Activated CD4-positive, alpha-beta T cell treated with anti-CD3 and anti-CD28 coated beads, Interleukin-2, amount 10 ng/mL, durations not matched to agents 24 days and 14 days (primary cell): ENCODE measurements at regions of chr5 and their contacts with region 1.

Region 1: DNA sequence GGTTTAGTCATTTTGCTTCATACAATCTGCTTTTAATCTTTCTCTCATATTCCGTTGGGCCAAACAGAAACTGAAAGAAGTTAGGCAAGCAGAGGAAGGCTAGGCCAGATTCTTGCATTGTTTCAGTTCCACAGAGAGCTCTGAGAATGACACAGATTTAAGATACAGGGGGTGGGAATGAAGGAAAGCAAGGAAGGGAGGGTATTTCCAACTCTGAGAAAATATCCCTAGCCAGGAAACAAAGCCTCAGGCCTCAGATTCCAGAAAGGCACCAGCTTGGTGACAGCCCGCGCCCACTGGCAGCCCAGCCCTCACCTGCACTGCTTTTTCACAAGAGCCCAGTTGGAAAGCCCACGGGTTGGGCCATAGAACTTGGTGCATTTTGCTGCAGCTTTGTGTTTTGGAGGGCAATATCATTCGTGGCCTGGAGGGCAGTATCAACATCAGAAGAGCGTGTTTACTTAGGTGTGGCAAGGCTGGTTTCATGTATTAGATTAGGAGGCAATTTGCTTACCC is 63.5 kb downstream of the ENC1 start:
- DNase-seq: peak; percentile 79
- H3K4me3 Mint-ChIP-seq: peak overlapping the region; percentile 50
- H3K27ac Mint-ChIP-seq: peak overlapping the region; percentile 30
- H3K4me1 Mint-ChIP-seq: peaks cover 35% of the 10 kb centered on the region
- H3K27me3 Mint-ChIP-seq: peaks cover 5% of the 10 kb centered on the region

Region 2: GRCh38 chr5:74326571-74327338 is 250.2 kb before region 1 on chr5:
- intact Hi-C with region 1: loop called (anchors 2 kb)
- DNase-seq: peak; percentile 64
- H3K4me3 Mint-ChIP-seq: no peak overlapping the region
- H3K27ac Mint-ChIP-seq: no peak overlapping the region
- H3K4me1 Mint-ChIP-seq: peaks cover 4% of the 10 kb centered on the region
- H3K27me3 Mint-ChIP-seq: peaks cover 12% of the 10 kb centered on the region

Region 3: DNA sequence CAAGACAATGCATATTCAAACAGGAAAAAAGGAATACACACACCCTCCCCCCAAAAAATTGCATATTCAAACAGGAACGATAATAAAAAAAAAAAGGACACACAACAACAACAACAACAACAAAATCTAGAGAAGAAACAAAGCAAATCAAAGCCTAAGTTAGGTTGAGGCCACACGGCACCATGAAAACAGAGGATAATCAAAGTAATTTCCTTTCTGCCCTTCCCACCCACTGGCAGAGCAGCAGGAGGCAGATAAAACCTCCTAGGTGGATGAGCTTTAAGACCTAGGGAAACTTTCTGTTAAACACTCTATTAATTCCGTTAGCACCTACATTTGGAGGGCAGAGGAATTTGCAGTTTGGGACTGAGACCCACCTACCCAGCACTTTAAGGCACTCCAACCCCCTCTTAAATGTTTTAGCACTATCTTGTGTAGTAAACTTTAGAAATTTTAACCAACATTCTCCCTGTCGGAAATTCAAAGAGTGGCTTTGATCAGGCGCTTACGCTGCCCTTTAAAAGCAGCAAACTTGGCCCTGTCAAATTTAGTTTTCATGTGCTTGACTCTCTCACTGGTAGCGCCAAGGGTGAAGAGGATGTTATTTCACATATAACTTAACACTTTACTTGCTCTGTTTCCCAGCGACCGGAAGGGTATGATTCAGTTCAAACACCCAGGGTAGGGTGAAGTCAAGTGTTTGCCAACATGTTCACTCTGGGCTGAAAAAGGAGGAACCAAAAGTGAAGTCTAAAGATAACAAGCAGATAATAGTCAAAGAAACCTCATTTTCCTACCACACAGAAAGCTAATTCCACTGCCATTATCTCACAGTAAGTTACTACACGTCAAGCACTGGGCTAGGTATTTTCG is 54.3 kb after region 1 on chr5:
- intact Hi-C with region 1: loop called (anchors 2 kb)
- DNase-seq: peak; percentile 75
- H3K4me3 Mint-ChIP-seq: no peak overlapping the region
- H3K27ac Mint-ChIP-seq: peak overlapping the region; percentile 59
- H3K4me1 Mint-ChIP-seq: peaks cover 13% of the 10 kb centered on the region
- H3K27me3 Mint-ChIP-seq: peaks cover 9% of the 10 kb centered on the region

Region 4: DNA sequence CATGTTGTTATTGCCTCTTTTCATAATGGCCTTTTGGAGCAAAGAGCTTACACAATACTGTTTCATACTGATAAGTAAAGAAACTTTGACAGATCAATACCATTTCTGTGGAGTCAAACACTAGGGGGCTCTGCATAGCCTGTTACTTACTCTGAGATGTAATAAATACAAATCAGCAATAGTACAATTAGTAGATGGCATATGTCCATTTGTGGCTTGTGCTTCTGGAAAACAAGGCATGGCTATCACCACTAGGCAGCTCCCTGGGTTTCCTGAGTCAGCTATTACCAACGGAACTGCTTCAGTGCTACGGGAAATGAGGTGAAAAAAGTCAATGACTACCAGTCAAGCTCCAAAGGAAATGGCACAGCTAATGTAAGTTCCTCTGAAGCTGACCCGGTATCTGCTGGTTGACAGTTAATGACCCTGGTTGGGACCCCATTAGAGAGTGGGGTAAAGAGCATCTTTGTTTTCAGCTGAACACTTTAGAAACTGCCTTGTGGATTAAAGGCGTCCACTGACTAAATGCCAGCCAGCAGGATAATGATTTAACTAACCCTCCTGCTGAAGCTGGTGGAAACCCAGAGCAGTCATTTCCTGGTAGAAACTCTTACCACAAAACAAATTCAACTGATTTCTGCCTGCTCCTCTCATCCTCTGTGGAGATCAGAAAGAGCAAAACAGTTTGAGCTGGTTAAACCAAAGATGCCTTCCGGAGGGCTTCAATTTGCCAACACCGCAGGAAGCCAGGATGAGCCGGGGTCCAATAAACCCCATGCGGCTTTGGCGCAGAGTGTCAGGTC is 358.2 kb after region 1 on chr5:
- intact Hi-C with region 1: loop called (anchors 10 kb)
- DNase-seq: peak; percentile 79
- H3K4me3 Mint-ChIP-seq: peak overlapping the region; percentile 65
- H3K27ac Mint-ChIP-seq: peak overlapping the region; percentile 70
- H3K4me1 Mint-ChIP-seq: peaks cover 35% of the 10 kb centered on the region
- H3K27me3 Mint-ChIP-seq: peaks cover 4% of the 10 kb centered on the region